Aorta (tissue), 5 donors: ENCODE measurements at regions of chrX and their contacts with region 1.

Region 1: GRCh38 chrX:115584696-115585095 is 23.7 kb downstream of the PLS3 start:
- DNase-seq: no peak
- ATAC-seq: no peak
- H3K4me3 ChIP-seq: no peak overlapping the region
- H3K27ac ChIP-seq: peak overlapping the region in 1 of 2 donors; percentile 22
- H3K4me1 ChIP-seq: no peaks in the 10 kb centered on the region
- H3K27me3 ChIP-seq: no peaks in the 10 kb centered on the region

Region 2: GRCh38 chrX:115525486-115525885 is 59.2 kb before region 1 on chrX:
- intact Hi-C with region 1: no loop called
- DNase-seq: no peak
- ATAC-seq: no peak
- H3K4me3 ChIP-seq: no peak overlapping the region
- H3K27ac ChIP-seq: no peak overlapping the region
- H3K4me1 ChIP-seq: no peaks in the 10 kb centered on the region
- H3K27me3 ChIP-seq: no peaks in the 10 kb centered on the region

Region 3: GRCh38 chrX:115630204-115630603 is 45.5 kb after region 1 on chrX:
- intact Hi-C with region 1: loop called in 1 of 2 experiments (anchors 10 kb)
- DNase-seq: no peak
- ATAC-seq: no peak
- H3K4me3 ChIP-seq: no peak overlapping the region
- H3K27ac ChIP-seq: peak overlapping the region in 1 of 2 donors; percentile 44
- H3K4me1 ChIP-seq: peaks cover 0 to 2% of the 10 kb centered on the region in 2 donors
- H3K27me3 ChIP-seq: no peaks in the 10 kb centered on the region